Tibial artery (tissue), 4 donors: ENCODE measurements at regions of chr10 and their contacts with region 1.

Region 1: DNA sequence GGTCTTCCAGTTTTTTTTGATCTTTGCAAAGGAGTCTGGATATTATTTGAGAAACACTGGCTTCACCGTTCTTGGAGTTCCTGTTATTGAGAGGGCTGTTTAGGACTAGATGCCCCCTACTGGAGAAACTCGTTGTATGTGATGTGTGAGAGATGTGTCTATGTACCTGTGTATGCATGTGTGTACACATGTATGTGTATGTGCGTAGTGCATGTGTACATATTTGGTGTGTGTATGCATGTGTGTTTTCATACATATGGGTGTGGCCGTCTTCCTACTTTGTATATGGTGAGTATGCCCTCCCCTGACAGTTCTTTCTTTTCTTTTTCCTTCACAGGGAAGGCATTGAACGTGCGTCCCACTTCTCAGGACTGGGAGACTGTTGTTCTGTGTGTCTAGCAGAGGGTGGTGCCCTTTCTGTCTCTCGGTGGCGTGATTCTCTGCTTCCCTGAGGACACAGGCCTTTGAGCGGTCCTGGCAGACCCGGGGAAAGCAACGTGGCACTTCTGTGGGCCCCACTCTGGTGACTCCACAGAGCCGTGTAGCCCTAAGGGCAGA is 3.0 kb upstream of the CALHM3 start:
- DNase-seq: peak in 1 of 2 donors; percentile 38
- H3K4me3 ChIP-seq: no peak overlapping the region
- H3K27ac ChIP-seq: no peak overlapping the region
- H3K4me1 ChIP-seq: peaks cover 0 to 6% (median 0%) of the 10 kb centered on the region in 4 donors
- H3K27me3 ChIP-seq: peaks cover 0 to 4% of the 10 kb centered on the region in 2 donors
- CTCF ChIP-seq: peak; percentile 67 to 80

Region 2: GRCh38 chr10:103181244-103181643 is 300.8 kb before region 1 on chr10:
- intact Hi-C with region 1: no loop called
- DNase-seq: no peak
- H3K4me3 ChIP-seq: no peak overlapping the region
- H3K27ac ChIP-seq: peak overlapping the region; percentile 23 to 59
- H3K4me1 ChIP-seq: peaks cover 0 to 87% (median 41%) of the 10 kb centered on the region in 4 donors
- H3K27me3 ChIP-seq: no peaks in the 10 kb centered on the region
- CTCF ChIP-seq: no peak

Region 3: GRCh38 chr10:103416436-103417147 is 65.5 kb before region 1 on chr10:
- intact Hi-C with region 1: loop called (anchors 2 kb)
- DNase-seq: peak; percentile 77 to 83
- H3K4me3 ChIP-seq: no peak overlapping the region
- H3K27ac ChIP-seq: no peak overlapping the region
- H3K4me1 ChIP-seq: no peaks in the 10 kb centered on the region
- H3K27me3 ChIP-seq: no peaks in the 10 kb centered on the region
- CTCF ChIP-seq: peak; percentile 69 to 75